Caco-2 (cell line): ENCODE measurements at regions of chr6 and their contacts with region 1.

Region 1: GRCh38 chr6:133568970-133569889 is 319.7 kb upstream of the TCF21 start:
- DNase-seq: peak; percentile 42 to 52
- H3K4me3 ChIP-seq: peak overlapping the region; percentile 13; the same call in 1 of the 2 replicates
- H3K4me3 Mint-ChIP-seq: peak overlapping the region; percentile 73
- H3K27ac Mint-ChIP-seq: no peak overlapping the region
- H3K4me1 ChIP-seq: no peaks in the 10 kb centered on the region
- H3K4me1 Mint-ChIP-seq: no peaks in the 10 kb centered on the region
- H3K27me3 ChIP-seq: no peaks in the 10 kb centered on the region
- H3K27me3 Mint-ChIP-seq: peaks cover 9% of the 10 kb centered on the region
- CTCF ChIP-seq: peak; percentile 77 to 88

Region 2: GRCh38 chr6:133301835-133302234 is 267.4 kb before region 1 on chr6:
- CTCF ChIA-PET with region 1: no interaction called
- POLR2A ChIA-PET with region 1: no interaction called
- intact Hi-C with region 1: no loop called
- DNase-seq: no peak
- H3K4me3 ChIP-seq: no peak overlapping the region
- H3K4me3 Mint-ChIP-seq: no peak overlapping the region
- H3K27ac Mint-ChIP-seq: no peak overlapping the region
- H3K4me1 ChIP-seq: no peaks in the 10 kb centered on the region
- H3K4me1 Mint-ChIP-seq: no peaks in the 10 kb centered on the region
- H3K27me3 ChIP-seq: no peaks in the 10 kb centered on the region
- H3K27me3 Mint-ChIP-seq: peaks cover 7% of the 10 kb centered on the region
- CTCF ChIP-seq: no peak

Region 3: GRCh38 chr6:133478673-133479072 is 90.6 kb before region 1 on chr6:
- CTCF ChIA-PET with region 1: no interaction called
- POLR2A ChIA-PET with region 1: no interaction called
- intact Hi-C with region 1: no loop called
- DNase-seq: no peak
- H3K4me3 ChIP-seq: no peak overlapping the region
- H3K4me3 Mint-ChIP-seq: no peak overlapping the region
- H3K27ac Mint-ChIP-seq: no peak overlapping the region
- H3K4me1 ChIP-seq: no peaks in the 10 kb centered on the region
- H3K4me1 Mint-ChIP-seq: no peaks in the 10 kb centered on the region
- H3K27me3 ChIP-seq: no peaks in the 10 kb centered on the region
- H3K27me3 Mint-ChIP-seq: no peaks in the 10 kb centered on the region
- CTCF ChIP-seq: no peak

Region 4: DNA sequence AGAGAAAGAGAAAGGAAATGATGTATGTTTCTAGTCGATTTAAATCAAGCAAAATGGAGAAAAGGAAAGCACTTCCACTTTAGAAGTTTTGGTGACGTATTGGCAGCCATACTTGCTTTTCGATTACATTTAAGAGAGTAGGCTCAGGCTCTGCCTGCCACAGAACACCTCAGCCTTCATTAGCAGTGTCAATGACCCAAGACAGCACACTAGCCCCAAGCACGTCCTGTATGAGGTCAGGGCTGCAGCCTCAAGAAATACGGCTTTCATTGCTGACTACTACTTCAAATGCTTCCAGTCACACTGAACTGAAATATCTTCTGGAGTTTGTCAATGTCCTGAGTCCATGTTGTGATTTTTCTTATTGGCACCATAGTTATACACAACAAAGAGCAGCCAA is 42.8 kb before region 1 on chr6:
- CTCF ChIA-PET with region 1: no interaction called
- POLR2A ChIA-PET with region 1: no interaction called
- intact Hi-C with region 1: no loop called
- DNase-seq: no peak
- H3K4me3 ChIP-seq: no peak overlapping the region
- H3K4me3 Mint-ChIP-seq: no peak overlapping the region
- H3K27ac Mint-ChIP-seq: no peak overlapping the region
- H3K4me1 ChIP-seq: no peaks in the 10 kb centered on the region
- H3K4me1 Mint-ChIP-seq: no peaks in the 10 kb centered on the region
- H3K27me3 ChIP-seq: no peaks in the 10 kb centered on the region; the same call in 1 of the 2 replicates
- H3K27me3 Mint-ChIP-seq: peaks cover 9% of the 10 kb centered on the region
- CTCF ChIP-seq: no peak

Region 5: DNA sequence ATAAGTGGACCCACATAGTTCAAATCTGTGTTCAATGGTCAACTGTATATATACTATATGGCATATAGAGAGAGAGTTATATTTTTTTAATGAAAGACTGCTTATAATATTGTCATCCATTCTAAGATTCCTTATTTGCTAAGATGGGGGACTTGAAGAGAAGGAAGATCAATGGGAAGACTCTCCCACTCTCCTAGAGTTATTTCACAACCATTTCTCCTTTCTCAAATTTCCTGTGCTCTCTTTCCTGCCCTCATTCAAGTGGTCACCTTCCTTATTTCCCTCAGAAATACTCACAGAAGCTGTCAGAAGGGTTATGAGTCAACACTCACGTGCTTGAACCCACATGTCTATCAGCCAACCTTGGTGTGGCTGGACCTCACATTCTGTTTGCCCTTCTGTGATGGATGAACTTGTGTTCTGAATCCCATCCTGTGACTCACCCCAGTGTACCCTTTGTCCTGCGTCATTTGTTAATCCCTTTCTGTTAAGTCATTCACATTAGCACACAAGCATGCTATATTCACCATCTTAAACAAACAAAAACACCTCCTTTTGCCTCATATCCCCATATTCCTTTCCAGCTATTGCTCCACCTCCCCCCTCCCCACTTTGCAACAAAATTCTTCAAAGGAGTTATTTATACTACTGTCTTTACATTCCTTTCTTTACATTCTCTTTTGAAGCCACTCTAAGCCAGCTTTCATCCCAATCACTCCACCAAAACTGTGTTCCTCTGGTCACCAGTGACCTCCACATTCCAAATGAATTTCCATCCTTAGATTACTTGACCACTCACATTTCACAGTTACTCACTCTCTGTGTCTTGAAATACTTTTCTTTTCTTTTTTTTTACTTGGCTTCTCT is 40.4 kb after region 1 on chr6:
- CTCF ChIA-PET with region 1: interaction called, 4 read pairs
- POLR2A ChIA-PET with region 1: interaction called, 4 read pairs
- intact Hi-C with region 1: loop called (anchors 1 kb)
- DNase-seq: peak; percentile 79 to 84
- H3K4me3 ChIP-seq: no peak overlapping the region
- H3K4me3 Mint-ChIP-seq: no peak overlapping the region
- H3K27ac Mint-ChIP-seq: no peak overlapping the region
- H3K4me1 ChIP-seq: peaks cover 33% of the 10 kb centered on the region
- H3K4me1 Mint-ChIP-seq: no peaks in the 10 kb centered on the region
- H3K27me3 ChIP-seq: no peaks in the 10 kb centered on the region
- H3K27me3 Mint-ChIP-seq: no peaks in the 10 kb centered on the region
- CTCF ChIP-seq: no peak

Region 6: DNA sequence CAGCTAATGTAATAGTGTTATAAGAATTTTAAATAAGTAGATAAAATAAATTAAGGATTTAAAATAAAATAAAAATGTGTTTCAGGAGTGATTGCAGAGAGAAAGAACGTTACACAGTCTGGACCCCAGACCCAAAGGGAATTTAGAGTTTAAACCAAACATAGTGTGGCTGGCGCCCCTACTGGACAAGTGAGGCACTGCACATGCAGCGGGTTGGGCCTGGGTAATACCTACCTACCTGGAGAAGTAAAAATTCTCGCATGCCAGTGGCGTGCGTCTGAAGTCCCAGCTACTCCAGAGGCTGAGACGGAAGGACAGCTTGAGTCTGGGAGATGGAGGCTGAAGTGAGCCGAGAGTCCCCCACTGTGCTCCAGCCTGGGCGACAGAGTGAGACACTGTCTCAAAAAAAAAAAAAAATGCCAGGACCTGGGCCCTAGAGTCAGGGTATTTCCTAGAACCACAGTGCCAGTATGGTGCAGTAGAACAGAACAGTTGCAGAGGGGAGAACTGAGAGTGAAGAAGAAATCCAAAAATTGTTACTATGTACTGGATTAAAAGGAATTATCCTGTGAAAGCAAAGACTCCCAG is 248.3 kb after region 1 on chr6:
- CTCF ChIA-PET with region 1: no interaction called
- POLR2A ChIA-PET with region 1: no interaction called
- intact Hi-C with region 1: loop called (anchors 1 kb)
- DNase-seq: peak; percentile 38 to 60
- H3K4me3 ChIP-seq: no peak overlapping the region
- H3K4me3 Mint-ChIP-seq: no peak overlapping the region
- H3K27ac Mint-ChIP-seq: no peak overlapping the region
- H3K4me1 ChIP-seq: no peaks in the 10 kb centered on the region
- H3K4me1 Mint-ChIP-seq: no peaks in the 10 kb centered on the region
- H3K27me3 ChIP-seq: no peaks in the 10 kb centered on the region
- H3K27me3 Mint-ChIP-seq: peaks cover 6% of the 10 kb centered on the region
- CTCF ChIP-seq: peak; percentile 67 to 83

Region 7: GRCh38 chr6:133916650-133917151 is 347.5 kb after region 1 on chr6:
- CTCF ChIA-PET with region 1: interaction called, 39 read pairs
- POLR2A ChIA-PET with region 1: no interaction called
- intact Hi-C with region 1: loop called (anchors 1 kb)
- DNase-seq: peak; percentile 83 to 86
- H3K4me3 ChIP-seq: no peak overlapping the region
- H3K4me3 Mint-ChIP-seq: no peak overlapping the region
- H3K27ac Mint-ChIP-seq: no peak overlapping the region
- H3K4me1 ChIP-seq: no peaks in the 10 kb centered on the region
- H3K4me1 Mint-ChIP-seq: no peaks in the 10 kb centered on the region
- H3K27me3 ChIP-seq: no peaks in the 10 kb centered on the region
- H3K27me3 Mint-ChIP-seq: peaks cover 16% of the 10 kb centered on the region
- CTCF ChIP-seq: peak; percentile 84 to 92

Region 8: GRCh38 chr6:134097114-134097707 is 528.0 kb after region 1 on chr6:
- CTCF ChIA-PET with region 1: interaction called, 8 read pairs
- POLR2A ChIA-PET with region 1: no interaction called
- intact Hi-C with region 1: loop called (anchors 2 kb)
- DNase-seq: peak; percentile 51 to 72
- H3K4me3 ChIP-seq: no peak overlapping the region
- H3K4me3 Mint-ChIP-seq: no peak overlapping the region
- H3K27ac Mint-ChIP-seq: no peak overlapping the region
- H3K4me1 ChIP-seq: no peaks in the 10 kb centered on the region
- H3K4me1 Mint-ChIP-seq: no peaks in the 10 kb centered on the region
- H3K27me3 ChIP-seq: no peaks in the 10 kb centered on the region; the same call in 1 of the 2 replicates
- H3K27me3 Mint-ChIP-seq: peaks cover 3% of the 10 kb centered on the region
- CTCF ChIP-seq: peak; percentile 56 to 60